ENCODE measurements at regions of chr1 and their contacts with region 1.

Region 1: DNA sequence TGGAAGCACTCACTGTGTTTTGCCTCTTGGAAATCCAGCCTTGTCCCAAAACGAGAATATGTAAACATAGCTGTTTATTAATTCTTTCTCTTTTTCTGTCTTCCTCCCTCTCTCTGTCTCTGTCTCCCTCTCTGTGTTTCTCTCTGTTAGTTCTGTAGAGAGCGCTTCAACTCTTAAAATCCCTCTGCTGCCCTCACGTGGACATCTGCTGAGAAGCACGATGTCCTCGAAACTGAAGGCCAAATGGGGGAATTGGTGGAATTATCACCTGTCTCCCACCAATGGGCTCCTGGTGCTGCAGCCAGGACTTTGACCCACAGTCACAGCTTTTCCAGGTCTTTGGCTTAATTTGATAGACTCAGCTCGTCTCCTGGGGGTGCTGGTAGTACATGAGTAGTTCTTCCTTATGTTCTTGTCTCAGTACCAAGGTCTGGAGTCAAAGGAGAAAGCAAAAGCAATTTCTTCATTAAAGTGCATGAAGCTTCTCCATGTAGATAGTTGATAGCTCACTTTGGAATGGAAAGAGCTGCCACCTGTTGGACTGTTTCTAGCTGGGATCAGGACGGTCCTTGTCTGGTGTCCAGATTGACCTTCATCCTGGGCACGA is 5.5 kb upstream of the GBP6 start:
- DNase-seq: peak; percentile 60 to 81 (median 75)
- ATAC-seq: peak; percentile 96
- H3K4me3 ChIP-seq: no peak overlapping the region
- H3K4me3 Mint-ChIP-seq: peak overlapping the region in 8 of 10 donors; percentile 1 to 82 (median 12)
- H3K27ac ChIP-seq: no peak overlapping the region
- H3K27ac Mint-ChIP-seq: peak overlapping the region in 6 of 9 donors; percentile 3 to 88 (median 46)
- H3K4me1 ChIP-seq: peaks cover 0 to 16% of the 10 kb centered on the region in 2 donors
- H3K4me1 Mint-ChIP-seq: peaks cover 5 to 61% (median 26%) of the 10 kb centered on the region in 7 donors
- H3K27me3 ChIP-seq: no peaks in the 10 kb centered on the region
- H3K27me3 Mint-ChIP-seq: peaks cover 0 to 8% (median 0%) of the 10 kb centered on the region in 5 donors

Region 2: DNA sequence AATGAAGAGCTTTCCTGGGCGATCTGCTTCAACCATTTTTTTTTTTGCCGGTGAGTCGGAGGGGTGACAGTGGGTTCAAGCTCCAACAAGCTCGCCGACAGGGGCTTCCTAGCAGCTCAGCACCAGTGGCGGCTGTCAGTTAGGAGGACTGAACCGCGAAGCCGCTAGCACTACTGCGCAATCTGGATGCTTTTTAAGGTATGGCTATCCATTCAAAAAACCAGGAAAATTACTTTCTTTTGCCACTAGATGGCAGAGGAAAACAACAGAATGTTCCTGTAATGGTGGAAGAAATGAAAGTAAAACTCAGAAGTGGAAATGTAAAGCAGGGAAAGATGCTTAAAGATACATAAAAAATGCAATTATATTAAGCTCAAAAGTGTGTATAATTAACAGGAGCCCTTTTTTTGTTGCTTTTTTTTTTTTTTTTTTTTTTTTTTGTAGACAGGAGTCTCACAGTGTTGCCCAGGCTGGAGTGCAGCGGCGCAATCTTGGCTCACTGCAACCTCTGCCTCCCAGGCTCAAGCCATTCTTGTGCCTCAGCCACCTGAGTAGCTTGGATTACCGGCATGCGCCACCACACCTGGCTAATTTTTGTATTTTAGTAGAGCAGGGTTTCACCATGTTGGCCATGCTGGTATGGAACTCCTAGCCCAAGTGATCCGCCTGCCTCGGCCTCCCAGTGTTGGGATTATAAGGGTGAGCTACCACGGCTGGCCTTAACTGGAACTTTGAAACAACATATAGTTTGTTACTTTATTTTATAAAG is 374.4 kb before region 1 on chr1:
- CTCF ChIA-PET with region 1: interaction called, 35 read pairs
- POLR2A ChIA-PET with region 1: interaction called, 3 read pairs
- intact Hi-C with region 1: loop called in 1 of 2 experiments (anchors 1 kb)
- DNase-seq: peak in 7 of 9 donors; percentile 52 to 72 (median 62)
- ATAC-seq: peak; percentile 85
- H3K4me3 ChIP-seq: no peak overlapping the region
- H3K4me3 Mint-ChIP-seq: peak overlapping the region in 9 of 10 donors; percentile 56 to 76 (median 63)
- H3K27ac ChIP-seq: peak overlapping the region; percentile 55
- H3K27ac Mint-ChIP-seq: peak overlapping the region; percentile 46 to 94 (median 81)
- H3K4me1 ChIP-seq: peaks cover 5 to 13% of the 10 kb centered on the region in 2 donors
- H3K4me1 Mint-ChIP-seq: peaks cover 29 to 82% (median 70%) of the 10 kb centered on the region in 7 donors
- H3K27me3 ChIP-seq: no peaks in the 10 kb centered on the region
- H3K27me3 Mint-ChIP-seq: no peaks in the 10 kb centered on the region

Region 3: DNA sequence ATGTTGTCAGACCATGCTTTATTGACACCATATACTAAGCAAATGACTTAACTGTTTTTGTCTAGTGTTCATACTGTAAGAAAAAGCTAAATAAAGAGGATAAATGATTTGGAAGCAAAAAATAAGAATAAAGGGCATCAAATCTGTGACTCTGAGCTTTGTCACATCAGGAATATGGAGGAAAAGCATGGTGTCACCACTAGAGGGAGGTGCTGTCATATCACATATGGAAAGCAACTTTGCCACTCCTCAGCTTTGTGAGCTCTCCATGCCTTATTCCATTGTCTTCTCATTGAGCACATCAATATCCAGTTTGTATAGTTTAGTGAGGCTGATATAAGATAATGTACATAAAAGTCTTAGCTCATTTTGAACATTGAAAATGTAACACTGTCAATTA is 272.6 kb before region 1 on chr1:
- CTCF ChIA-PET with region 1: interaction called, 19 read pairs
- POLR2A ChIA-PET with region 1: no interaction called
- intact Hi-C with region 1: loop called (anchors 1 kb)
- DNase-seq: peak in 6 of 9 donors; percentile 30 to 69 (median 42)
- ATAC-seq: peak; percentile 84
- H3K4me3 ChIP-seq: no peak overlapping the region
- H3K4me3 Mint-ChIP-seq: no peak overlapping the region
- H3K27ac ChIP-seq: no peak overlapping the region
- H3K27ac Mint-ChIP-seq: no peak overlapping the region
- H3K4me1 ChIP-seq: no peaks in the 10 kb centered on the region
- H3K4me1 Mint-ChIP-seq: peaks cover 0 to 12% (median 0%) of the 10 kb centered on the region in 7 donors
- H3K27me3 ChIP-seq: no peaks in the 10 kb centered on the region
- H3K27me3 Mint-ChIP-seq: peaks cover 0 to 2% (median 0%) of the 10 kb centered on the region in 5 donors

Region 4: GRCh38 chr1:89198491-89199072 is 159.8 kb before region 1 on chr1 and contains the start of gene GBP4:
- CTCF ChIA-PET with region 1: interaction called, 9 read pairs
- POLR2A ChIA-PET with region 1: interaction called, 4 read pairs
- intact Hi-C with region 1: loop called (anchors 1 kb)
- DNase-seq: peak; percentile 25 to 49 (median 41)
- ATAC-seq: peak; percentile 73
- H3K4me3 ChIP-seq: peak within 1 kb of the TSS; percentile 92
- H3K4me3 Mint-ChIP-seq: peak within 1 kb of the TSS; percentile 91 to 99 (median 97)
- H3K27ac ChIP-seq: peak within 1 kb of the TSS; percentile 88
- H3K27ac Mint-ChIP-seq: peak within 1 kb of the TSS; percentile 91 to 99 (median 95)
- H3K4me1 ChIP-seq: peaks cover 42 to 47% of the 10 kb centered on the region in 2 donors
- H3K4me1 Mint-ChIP-seq: peaks cover 51 to 82% (median 71%) of the 10 kb centered on the region in 7 donors
- H3K27me3 ChIP-seq: no peaks in the 10 kb centered on the region
- H3K27me3 Mint-ChIP-seq: no peaks in the 10 kb centered on the region
- total RNA-seq, gene GBP4: 29.1 to 174 (median 37.4) TPM

Region 5: DNA sequence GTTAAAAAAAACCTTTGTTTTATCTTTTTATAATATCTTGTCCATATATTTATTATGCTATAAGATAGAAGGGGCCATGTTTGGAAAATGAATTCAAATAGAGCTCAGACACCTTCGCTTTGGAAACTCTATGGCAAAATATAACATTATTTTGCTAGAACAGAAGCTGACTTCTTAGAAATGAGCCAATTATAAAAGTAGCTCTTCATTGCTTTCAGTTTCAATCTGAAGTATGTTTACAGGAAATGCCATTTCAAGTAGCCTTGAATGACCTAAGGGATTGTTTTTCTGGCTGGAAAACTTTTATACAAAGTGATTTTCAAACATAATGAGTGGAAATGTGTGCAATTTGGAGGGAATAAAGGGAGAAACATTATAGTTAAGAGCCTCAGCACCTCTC is 47.9 kb before region 1 on chr1:
- CTCF ChIA-PET with region 1: interaction called, 4 read pairs
- POLR2A ChIA-PET with region 1: interaction called, 7 read pairs
- intact Hi-C with region 1: loop called in 1 of 2 experiments (anchors 1 kb)
- DNase-seq: peak in 5 of 9 donors; percentile 15 to 38 (median 24)
- ATAC-seq: peak; percentile 48
- H3K4me3 ChIP-seq: peak overlapping the region; percentile 17
- H3K4me3 Mint-ChIP-seq: peak overlapping the region in 9 of 10 donors; percentile 33 to 85 (median 69)
- H3K27ac ChIP-seq: peak overlapping the region; percentile 41
- H3K27ac Mint-ChIP-seq: peak overlapping the region; percentile 76 to 98 (median 89)
- H3K4me1 ChIP-seq: peaks cover 39 to 40% of the 10 kb centered on the region in 2 donors
- H3K4me1 Mint-ChIP-seq: peaks cover 29 to 64% (median 57%) of the 10 kb centered on the region in 7 donors
- H3K27me3 ChIP-seq: no peaks in the 10 kb centered on the region
- H3K27me3 Mint-ChIP-seq: no peaks in the 10 kb centered on the region

Region 6: DNA sequence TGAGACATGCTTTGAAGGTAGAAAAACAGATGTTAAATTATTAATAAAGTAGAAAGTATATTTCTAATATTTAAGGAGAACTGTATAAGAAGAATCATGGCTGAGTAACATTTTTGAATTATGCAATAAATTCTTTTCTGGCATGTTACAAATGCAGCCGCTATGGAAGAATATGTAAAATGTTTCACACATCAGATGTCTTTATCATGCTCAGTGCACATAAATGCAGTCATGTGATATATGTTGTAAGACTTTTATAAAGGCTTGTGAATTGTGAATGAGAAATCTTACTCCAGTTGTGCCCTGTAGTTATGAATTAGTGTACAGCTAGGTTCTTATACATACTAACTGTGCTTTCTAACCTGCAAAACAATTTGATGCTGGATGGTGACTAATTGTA is 219.8 kb after region 1 on chr1:
- CTCF ChIA-PET with region 1: no interaction called
- POLR2A ChIA-PET with region 1: no interaction called
- intact Hi-C with region 1: no loop called
- DNase-seq: no peak
- ATAC-seq: no peak
- H3K4me3 ChIP-seq: no peak overlapping the region
- H3K4me3 Mint-ChIP-seq: no peak overlapping the region
- H3K27ac ChIP-seq: no peak overlapping the region
- H3K27ac Mint-ChIP-seq: no peak overlapping the region
- H3K4me1 ChIP-seq: no peaks in the 10 kb centered on the region
- H3K4me1 Mint-ChIP-seq: peaks cover 3 to 47% (median 26%) of the 10 kb centered on the region in 7 donors
- H3K27me3 ChIP-seq: no peaks in the 10 kb centered on the region
- H3K27me3 Mint-ChIP-seq: no peaks in the 10 kb centered on the region